ENCODE measurements at regions of chr18 and their contacts with region 1.

Region 1: GRCh38 chr18:23032030-23032582 is 99.0 kb downstream of the RBBP8 start:
- DNase-seq: no peak
- H3K4me3 ChIP-seq: no peak overlapping the region
- H3K27ac ChIP-seq: no peak overlapping the region
- H3K4me1 ChIP-seq: peaks cover 0 to 6% (median under 1%) of the 10 kb centered on the region in 4 experiments; a peak in 1 of 7 replicates
- H3K27me3 ChIP-seq: no peaks in the 10 kb centered on the region
- CTCF ChIP-seq: no peak
- EP300 ChIP-seq: no peak
- POLR2A ChIP-seq: no peak
- RAD21 ChIP-seq: no peak

Region 2: GRCh38 chr18:22846088-22846683 is 185.9 kb before region 1 on chr18:
- CTCF ChIA-PET with region 1: no interaction called
- POLR2A ChIA-PET with region 1: no interaction called
- DNase-seq: no peak
- H3K4me3 ChIP-seq: no peak overlapping the region
- H3K27ac ChIP-seq: no peak overlapping the region
- H3K4me1 ChIP-seq: no peaks in the 10 kb centered on the region
- H3K27me3 ChIP-seq: no peaks in the 10 kb centered on the region
- CTCF ChIP-seq: no peak; a peak in 1 of 4 replicates
- EP300 ChIP-seq: no peak
- POLR2A ChIP-seq: no peak
- RAD21 ChIP-seq: peak in 1 of 2 experiments; percentile 32; a peak in 2 of 4 replicates

Region 3: GRCh38 chr18:23053776-23054457 is 21.8 kb after region 1 on chr18:
- CTCF ChIA-PET with region 1: interaction called, 15 read pairs
- POLR2A ChIA-PET with region 1: no interaction called
- DNase-seq: peak; percentile 39 to 62
- H3K4me3 ChIP-seq: no peak overlapping the region; a peak in 2 of 8 replicates
- H3K27ac ChIP-seq: 0 out of 2 replicates have a peak overlapping the region, but pooled peaks have one; percentile 7
- H3K4me1 ChIP-seq: peaks cover 0 to 3% (median under 1%) of the 10 kb centered on the region in 4 experiments; a peak in 2 of 7 replicates
- H3K27me3 ChIP-seq: no peaks in the 10 kb centered on the region
- CTCF ChIP-seq: peak; percentile 65 to 94 (median 84)
- EP300 ChIP-seq: peak; percentile 7 to 70; a peak in 2 of 3 replicates
- POLR2A ChIP-seq: no peak
- RAD21 ChIP-seq: peak; percentile 56 to 69

Region 4: GRCh38 chr18:23412351-23412964 is 380.4 kb after region 1 on chr18:
- CTCF ChIA-PET with region 1: interaction called, 10 read pairs
- POLR2A ChIA-PET with region 1: no interaction called
- DNase-seq: no peak
- H3K4me3 ChIP-seq: no peak overlapping the region
- H3K27ac ChIP-seq: no peak overlapping the region
- H3K4me1 ChIP-seq: no peaks in the 10 kb centered on the region
- H3K27me3 ChIP-seq: no peaks in the 10 kb centered on the region
- CTCF ChIP-seq: no peak
- EP300 ChIP-seq: no peak
- POLR2A ChIP-seq: no peak
- RAD21 ChIP-seq: no peak

Measured in H1 (cell line).